Common myeloid progenitor, CD34-positive (primary cell): ENCODE measurements at regions of chr14 and their contacts with region 1.

Region 1: GRCh38 chr14:77124345-77125280 is 17.0 kb downstream of the ZDHHC22 start:
- DNase-seq: peak in 2 of 3 donors; percentile 67 to 71
- H3K4me3 ChIP-seq: peak overlapping the region in 6 of 7 experiments; percentile 28 to 68 (median 60)
- H3K27ac ChIP-seq: no peak overlapping the region
- H3K4me1 ChIP-seq: peaks cover 0 to 20% (median 15%) of the 10 kb centered on the region in 4 experiments
- H3K27me3 ChIP-seq: peaks cover 0 to 69% (median 43%) of the 10 kb centered on the region in 5 experiments

Region 2: GRCh38 chr14:77105145-77105939 is 19.3 kb before region 1 on chr14:
- CTCF ChIA-PET with region 1: interaction called, 15 read pairs
- POLR2A ChIA-PET with region 1: no interaction called
- DNase-seq: no peak
- H3K4me3 ChIP-seq: no peak overlapping the region
- H3K27ac ChIP-seq: no peak overlapping the region
- H3K4me1 ChIP-seq: peaks cover 0 to 4% (median 0%) of the 10 kb centered on the region in 4 experiments
- H3K27me3 ChIP-seq: no peaks in the 10 kb centered on the region

Region 3: DNA sequence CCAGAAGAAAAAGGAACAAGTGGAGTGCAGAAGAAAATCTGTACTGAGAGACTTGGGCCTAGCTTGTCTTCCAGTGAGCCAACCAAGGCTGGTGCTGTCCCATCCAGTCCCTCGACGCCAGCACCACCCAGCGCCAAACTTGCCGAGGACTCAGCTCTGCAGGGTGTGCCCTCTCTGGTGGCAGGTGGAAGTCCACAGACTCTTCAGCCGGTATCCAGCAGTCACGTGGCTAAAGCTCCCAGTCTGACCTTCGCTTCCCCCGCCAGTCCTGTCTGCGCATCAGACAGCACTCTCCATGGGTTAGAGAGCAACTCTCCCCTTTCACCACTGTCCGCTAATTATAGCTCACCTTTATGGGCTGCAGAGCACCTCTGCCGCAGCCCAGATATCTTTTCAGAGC is 11.0 kb before region 1 on chr14:
- CTCF ChIA-PET with region 1: interaction called, 18 read pairs
- POLR2A ChIA-PET with region 1: no interaction called
- DNase-seq: no peak
- H3K4me3 ChIP-seq: no peak overlapping the region
- H3K27ac ChIP-seq: no peak overlapping the region
- H3K4me1 ChIP-seq: no peaks in the 10 kb centered on the region
- H3K27me3 ChIP-seq: no peaks in the 10 kb centered on the region

Region 4: DNA sequence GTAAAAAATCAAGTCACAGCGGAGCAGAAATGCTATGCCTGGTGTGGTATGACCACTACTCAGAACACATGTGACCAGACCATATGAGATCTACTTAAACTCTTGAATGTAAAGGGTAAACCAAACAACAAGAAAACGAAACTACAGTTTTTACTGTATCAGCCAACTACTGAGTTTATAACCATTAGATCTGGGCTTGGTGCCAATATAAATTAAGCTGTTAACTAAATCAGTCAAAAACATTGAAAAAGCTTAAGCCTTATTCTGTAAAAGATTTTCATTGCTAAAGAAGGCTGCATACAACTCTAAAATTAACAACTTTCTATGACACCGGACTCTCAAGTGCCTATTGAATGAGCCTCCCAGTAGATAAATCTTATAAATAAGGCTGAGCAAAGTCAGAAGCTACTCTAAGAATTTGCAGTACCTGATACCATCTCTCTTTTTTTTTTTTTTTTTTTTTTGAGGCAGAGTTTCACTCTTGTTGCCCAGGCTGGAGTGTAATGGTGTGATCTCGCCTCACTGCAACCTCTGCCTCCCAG is 456.4 kb after region 1 on chr14:
- CTCF ChIA-PET with region 1: no interaction called
- POLR2A ChIA-PET with region 1: no interaction called
- DNase-seq: peak; percentile 61 to 89 (median 83)
- H3K4me3 ChIP-seq: peak overlapping the region in 5 of 7 experiments; percentile 21 to 66 (median 34)
- H3K27ac ChIP-seq: peak overlapping the region; percentile 40 to 44
- H3K4me1 ChIP-seq: peaks cover 6 to 42% (median 27%) of the 10 kb centered on the region in 4 experiments
- H3K27me3 ChIP-seq: no peaks in the 10 kb centered on the region